H1 (cell line): ENCODE measurements at regions of chr3 and their contacts with region 1.

Region 1: GRCh38 chr3:141266797-141267555 is 35.4 kb downstream of the PXYLP1 start:
- DNase-seq: no peak
- H3K4me3 ChIP-seq: no peak overlapping the region
- H3K27ac ChIP-seq: no peak overlapping the region
- H3K4me1 ChIP-seq: no peaks in the 10 kb centered on the region
- H3K27me3 ChIP-seq: no peaks in the 10 kb centered on the region
- CTCF ChIP-seq: no peak
- EP300 ChIP-seq: no peak
- POLR2A ChIP-seq: no peak
- RAD21 ChIP-seq: no peak

Region 2: DNA sequence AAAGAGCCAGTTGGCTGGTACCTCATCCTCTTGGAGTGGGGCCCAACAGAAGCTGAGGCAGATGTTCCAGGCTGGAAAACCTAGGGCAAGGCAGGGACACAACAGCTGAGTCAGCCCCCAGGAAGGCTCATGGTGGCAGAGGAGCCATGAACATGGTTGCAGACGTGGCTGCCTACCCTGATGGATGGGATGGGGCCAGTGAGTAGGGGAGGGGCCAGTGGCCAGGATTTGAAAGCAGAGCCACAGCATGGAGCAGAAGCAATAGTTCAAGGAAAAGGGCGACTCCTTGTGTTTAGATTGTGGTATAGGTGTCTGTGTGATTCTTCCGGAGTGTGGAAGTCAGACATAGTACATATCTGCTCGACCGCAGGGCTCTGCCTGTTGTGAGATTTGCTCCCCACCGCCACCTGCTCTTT is 11.1 kb before region 1 on chr3:
- CTCF ChIA-PET with region 1: interaction called, 39 read pairs
- POLR2A ChIA-PET with region 1: no interaction called
- DNase-seq: peak in 1 of 2 experiments; percentile 54
- H3K4me3 ChIP-seq: no peak overlapping the region
- H3K27ac ChIP-seq: no peak overlapping the region
- H3K4me1 ChIP-seq: peaks cover 0 to 5% (median 0%) of the 10 kb centered on the region in 4 experiments; a peak in 3 of 7 replicates
- H3K27me3 ChIP-seq: no peaks in the 10 kb centered on the region
- CTCF ChIP-seq: peak in 2 of 3 experiments; percentile 47 to 78; a peak in 3 of 4 replicates
- EP300 ChIP-seq: no peak
- POLR2A ChIP-seq: no peak
- RAD21 ChIP-seq: peak; percentile 65 to 73